Natural killer cell (primary cell): ENCODE measurements at regions of chr5 and their contacts with region 1.

Region 1: DNA sequence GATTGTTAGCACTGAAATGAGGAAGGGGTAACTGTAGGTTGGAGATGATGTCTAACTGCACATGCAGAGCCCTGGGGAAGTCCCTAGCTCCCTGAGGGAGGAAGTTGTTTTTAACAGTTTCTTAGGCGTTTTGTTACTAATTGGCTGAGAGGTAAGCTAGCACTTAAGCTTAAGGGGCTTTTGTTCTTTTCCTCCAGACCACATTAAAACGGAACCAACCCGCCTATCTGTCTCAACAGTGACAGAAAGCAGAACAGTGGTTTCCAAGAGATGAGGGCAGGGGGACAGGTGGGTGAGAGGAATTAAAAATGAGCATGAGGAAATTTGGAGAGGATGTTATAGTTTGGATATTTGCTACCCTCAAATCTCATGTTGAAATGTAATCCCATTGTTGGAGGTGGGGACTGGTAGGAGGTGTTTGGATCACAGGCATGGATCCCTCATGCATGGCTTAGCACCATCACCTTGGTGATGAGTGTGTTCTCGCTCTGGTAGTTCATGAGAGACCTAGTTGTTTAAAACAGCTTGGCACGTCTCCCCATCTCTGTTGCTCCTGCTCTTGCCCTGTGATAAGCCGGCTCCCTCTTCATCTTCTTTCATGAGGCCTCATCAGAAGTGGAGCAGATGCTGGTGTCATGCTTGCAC is 38.9 kb downstream of the LYRM7 start:
- DNase-seq: peak; percentile 43 to 90
- ATAC-seq: peak; percentile 88 to 98 (median 97)
- H3K4me3 ChIP-seq: peak overlapping the region; percentile 5
- H3K4me3 Mint-ChIP-seq: peak overlapping the region; percentile 77
- H3K27ac ChIP-seq: peak overlapping the region; percentile 88
- H3K27ac Mint-ChIP-seq: peak overlapping the region; percentile 89 to 92
- H3K4me1 ChIP-seq: peaks cover 28% of the 10 kb centered on the region
- H3K4me1 Mint-ChIP-seq: peaks cover 31 to 36% of the 10 kb centered on the region in 2 donors
- H3K27me3 ChIP-seq: no peaks in the 10 kb centered on the region
- H3K27me3 Mint-ChIP-seq: no peaks in the 10 kb centered on the region
- CTCF ChIP-seq: no peak

Region 2: DNA sequence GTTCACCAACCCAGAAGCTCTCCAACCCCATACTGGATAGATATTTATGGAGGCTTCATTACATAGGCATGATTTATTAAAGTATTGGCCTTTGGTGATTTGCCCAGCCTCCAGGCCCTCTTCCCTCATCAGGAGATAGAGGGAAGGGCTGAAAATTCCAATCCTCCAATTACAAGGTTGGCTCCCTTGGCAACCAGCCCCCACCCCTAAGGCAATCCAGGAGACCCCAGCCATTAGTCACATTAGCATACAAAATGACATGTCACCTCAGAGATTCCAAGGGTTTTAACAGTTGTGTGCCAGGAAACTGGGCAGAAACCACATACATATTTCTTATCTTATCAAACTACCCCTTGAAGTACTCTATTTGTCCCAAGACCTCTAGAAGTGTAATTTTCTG is 254.6 kb before region 1 on chr5:
- intact Hi-C with region 1: no loop called
- DNase-seq: no peak
- ATAC-seq: no peak
- H3K4me3 ChIP-seq: no peak overlapping the region
- H3K4me3 Mint-ChIP-seq: no peak overlapping the region
- H3K27ac ChIP-seq: no peak overlapping the region
- H3K27ac Mint-ChIP-seq: no peak overlapping the region
- H3K4me1 ChIP-seq: no peaks in the 10 kb centered on the region
- H3K4me1 Mint-ChIP-seq: no peaks in the 10 kb centered on the region
- H3K27me3 ChIP-seq: no peaks in the 10 kb centered on the region
- H3K27me3 Mint-ChIP-seq: no peaks in the 10 kb centered on the region
- CTCF ChIP-seq: no peak

Region 3: GRCh38 chr5:131170540-131171275 is 38.9 kb before region 1 on chr5 and contains the start of gene LYRM7:
- intact Hi-C with region 1: loop called (anchors 1 kb)
- DNase-seq: peak; percentile 87 to 99
- ATAC-seq: peak; percentile 95 to 99 (median 95)
- H3K4me3 ChIP-seq: peak within 1 kb of the TSS; percentile 84
- H3K4me3 Mint-ChIP-seq: peak within 1 kb of the TSS; percentile 98
- H3K27ac ChIP-seq: peak within 1 kb of the TSS; percentile 87
- H3K27ac Mint-ChIP-seq: peak within 1 kb of the TSS; percentile 91 to 98
- H3K4me1 ChIP-seq: peaks cover 11% of the 10 kb centered on the region
- H3K4me1 Mint-ChIP-seq: peaks cover 29 to 32% of the 10 kb centered on the region in 2 donors
- H3K27me3 ChIP-seq: no peaks in the 10 kb centered on the region
- H3K27me3 Mint-ChIP-seq: no peaks in the 10 kb centered on the region
- CTCF ChIP-seq: no peak
- total RNA-seq, gene LYRM7: 7.4 to 9.7 (median 7.6) TPM

Region 4: DNA sequence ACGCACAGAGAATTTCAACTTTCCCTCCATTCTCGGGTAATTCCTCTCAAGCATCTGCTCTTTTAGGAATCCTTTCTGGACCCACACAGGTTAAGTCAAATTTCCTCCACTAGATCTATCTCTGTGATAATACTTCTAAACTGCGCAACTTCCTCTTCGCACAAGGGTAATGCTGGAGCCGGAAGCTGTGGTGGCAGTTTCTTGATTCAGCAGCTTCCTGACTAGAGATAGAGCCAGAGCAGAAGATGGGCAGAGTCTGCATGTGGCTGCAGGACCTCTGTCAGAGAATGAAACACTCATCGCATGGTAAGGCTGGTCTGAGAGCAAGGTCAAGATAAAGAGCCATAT is 43.2 kb after region 1 on chr5:
- intact Hi-C with region 1: loop called (anchors 1 kb)
- DNase-seq: peak; percentile 69 to 94
- ATAC-seq: peak; percentile 72 to 89 (median 88)
- H3K4me3 ChIP-seq: peak overlapping the region; percentile 47
- H3K4me3 Mint-ChIP-seq: peak overlapping the region; percentile 91
- H3K27ac ChIP-seq: peak overlapping the region; percentile 99
- H3K27ac Mint-ChIP-seq: peak overlapping the region; percentile 91 to 93
- H3K4me1 ChIP-seq: peaks cover 55% of the 10 kb centered on the region
- H3K4me1 Mint-ChIP-seq: peaks cover 54 to 58% of the 10 kb centered on the region in 2 donors
- H3K27me3 ChIP-seq: no peaks in the 10 kb centered on the region
- H3K27me3 Mint-ChIP-seq: no peaks in the 10 kb centered on the region
- CTCF ChIP-seq: no peak